Endothelial cell of umbilical vein (primary cell): ENCODE measurements at regions of chr9 and their contacts with region 1.

Region 1: DNA sequence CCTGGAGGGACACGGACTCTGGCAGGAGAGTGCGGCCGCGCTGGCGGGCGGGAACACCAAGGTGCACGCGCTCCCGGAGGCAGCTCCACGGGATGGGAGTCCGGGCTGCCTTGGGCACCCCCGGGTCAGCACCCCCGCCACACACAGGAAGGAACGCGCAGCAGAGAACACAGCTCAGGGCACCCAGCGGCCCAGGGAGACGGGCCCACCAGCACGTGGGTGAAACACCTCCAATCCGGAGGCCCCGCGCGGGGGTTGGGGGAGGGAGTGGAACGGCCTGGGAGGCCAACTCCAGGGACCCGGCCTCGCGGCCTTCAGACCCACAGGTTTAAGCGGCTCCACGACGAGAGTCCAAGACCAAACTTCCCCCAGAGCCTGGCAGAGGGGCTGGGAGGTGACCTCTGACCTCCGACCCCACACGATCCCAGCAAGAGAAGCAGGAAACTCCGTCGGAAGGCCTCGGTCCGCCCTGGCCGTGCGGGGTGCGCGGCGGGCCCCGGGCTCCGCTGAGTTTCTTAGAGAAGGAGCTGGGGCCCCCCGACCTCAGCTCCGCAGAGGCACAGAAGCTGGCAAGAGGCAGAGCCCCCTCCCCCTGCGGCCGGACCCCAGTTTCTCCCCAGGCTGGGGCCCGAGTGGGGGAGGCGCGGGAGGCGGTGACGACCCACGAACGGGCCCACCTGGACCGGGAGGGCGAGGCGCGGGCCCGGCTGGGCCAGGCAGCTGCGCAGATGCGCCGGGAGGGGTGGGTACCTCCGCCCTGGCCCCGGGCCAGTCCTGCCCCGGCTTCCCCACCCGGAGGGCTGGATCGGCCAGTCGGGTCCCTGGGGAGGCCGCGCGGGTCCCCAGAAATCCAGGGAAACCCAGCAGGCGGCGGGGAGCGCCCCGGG is 851 bp downstream of the NACC2 start:
- DNase-seq: peak; percentile 33
- H3K4me3 ChIP-seq: peak overlapping the region; percentile 58 to 86 (median 68)
- H3K27ac ChIP-seq: peak overlapping the region; percentile 64
- H3K4me1 ChIP-seq: peaks cover 19% of the 10 kb centered on the region
- H3K27me3 ChIP-seq: no peaks in the 10 kb centered on the region
- CTCF ChIP-seq: no peak
- POLR2A ChIP-seq: peak; percentile 17

Region 2: GRCh38 chr9:136109351-136110081 is 15.3 kb after region 1 on chr9:
- CTCF ChIA-PET with region 1: interaction called, 7 read pairs
- POLR2A ChIA-PET with region 1: interaction called, 6 read pairs
- dilution Hi-C with region 1: no loop called
- intact Hi-C with region 1: loop called (anchors 1 kb)
- DNase-seq: peak; percentile 87
- H3K4me3 ChIP-seq: peak overlapping the region in 1 of 3 experiments; percentile 9
- H3K27ac ChIP-seq: no peak overlapping the region
- H3K4me1 ChIP-seq: peaks cover 13% of the 10 kb centered on the region
- H3K27me3 ChIP-seq: no peaks in the 10 kb centered on the region
- CTCF ChIP-seq: no peak
- POLR2A ChIP-seq: peak; percentile 60

Region 3: GRCh38 chr9:136225748-136226679 is 131.8 kb after region 1 on chr9:
- CTCF ChIA-PET with region 1: no interaction called
- POLR2A ChIA-PET with region 1: no interaction called
- dilution Hi-C with region 1: no loop called
- intact Hi-C with region 1: loop called (anchors 5 kb)
- DNase-seq: peak; percentile 42
- H3K4me3 ChIP-seq: no peak overlapping the region
- H3K27ac ChIP-seq: no peak overlapping the region
- H3K4me1 ChIP-seq: peaks cover 7% of the 10 kb centered on the region
- H3K27me3 ChIP-seq: no peaks in the 10 kb centered on the region
- CTCF ChIP-seq: peak; percentile 82 to 96
- POLR2A ChIP-seq: no peak